ENCODE measurements at regions of chrX and their contacts with region 1.

Region 1: GRCh38 chrX:17374619-17375366 is at the start of gene NHS:
- DNase-seq: peak; percentile 61 to 79 (median 64)
- ATAC-seq: peak; percentile 67 to 89 (median 88)
- H3K4me3 ChIP-seq: peak within 1 kb of the TSS; percentile 26 to 67 (median 52)
- H3K27ac ChIP-seq: peak within 1 kb of the TSS in 7 of 12 donors; percentile 6 to 81 (median 39)
- H3K4me1 ChIP-seq: peaks cover 0 to 14% (median 0%) of the 10 kb centered on the region in 12 donors
- H3K27me3 ChIP-seq: peaks cover 0 to 41% (median 0%) of the 10 kb centered on the region in 9 donors
- CTCF ChIP-seq: peak in 11 of 12 donors; percentile 26 to 65 (median 43)
- POLR2A ChIP-seq: no peak
- total RNA-seq, gene NHS: 0.67 to 3.4 (median 1.7) TPM

Region 2: DNA sequence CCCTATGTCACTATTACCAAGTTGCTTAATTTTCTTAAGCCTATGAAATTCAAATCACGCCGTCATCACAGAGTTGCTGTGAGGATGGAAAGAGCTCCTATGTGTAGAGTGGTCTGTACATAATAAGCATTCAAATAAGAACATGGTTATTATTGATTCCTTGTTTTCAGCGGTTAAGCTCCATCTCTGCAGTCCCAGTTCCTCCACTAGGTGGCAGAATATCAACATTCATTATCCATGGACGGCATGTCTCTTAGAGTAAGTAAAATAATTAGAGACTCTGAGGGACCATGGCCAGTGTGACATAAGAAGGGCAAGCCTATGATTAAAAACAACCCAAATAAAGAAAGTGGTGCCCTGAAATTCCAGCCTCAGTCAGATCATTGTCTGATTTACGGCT is 132.3 kb before region 1 on chrX:
- intact Hi-C with region 1: loop called in 5 of 10 experiments (anchors 5 to 10 kb)
- DNase-seq: peak in 2 of 5 donors; percentile 7 to 18
- ATAC-seq: peak in 1 of 4 donors; percentile 55
- H3K4me3 ChIP-seq: no peak overlapping the region
- H3K27ac ChIP-seq: no peak overlapping the region
- H3K4me1 ChIP-seq: no peaks in the 10 kb centered on the region
- H3K27me3 ChIP-seq: peaks cover 0 to 4% (median 0%) of the 10 kb centered on the region in 9 donors
- CTCF ChIP-seq: peak; percentile 56 to 78 (median 70)
- POLR2A ChIP-seq: no peak

Region 3: GRCh38 chrX:17521871-17522693 is 147.3 kb after region 1 on chrX:
- intact Hi-C with region 1: loop called in 4 of 10 experiments (anchors 5 to 10 kb)
- DNase-seq: peak in 1 of 5 donors; percentile 31
- ATAC-seq: peak in 1 of 4 donors; percentile 19
- H3K4me3 ChIP-seq: no peak overlapping the region
- H3K27ac ChIP-seq: peak overlapping the region in 1 of 12 donors; percentile 11
- H3K4me1 ChIP-seq: peaks cover 0 to 12% (median 2%) of the 10 kb centered on the region in 12 donors
- H3K27me3 ChIP-seq: peaks cover 0 to 4% (median 0%) of the 10 kb centered on the region in 9 donors
- CTCF ChIP-seq: no peak
- POLR2A ChIP-seq: no peak

Region 4: GRCh38 chrX:17580539-17581152 is 205.9 kb after region 1 on chrX:
- intact Hi-C with region 1: loop called in 2 of 10 experiments (anchors 10 kb)
- DNase-seq: peak in 2 of 5 donors; percentile 20 to 27
- ATAC-seq: peak; percentile 51 to 86 (median 84)
- H3K4me3 ChIP-seq: no peak overlapping the region
- H3K27ac ChIP-seq: peak overlapping the region in 4 of 12 donors; percentile 18 to 48 (median 38)
- H3K4me1 ChIP-seq: peaks cover 0 to 17% (median 4%) of the 10 kb centered on the region in 12 donors
- H3K27me3 ChIP-seq: peaks cover 0 to 7% (median 0%) of the 10 kb centered on the region in 9 donors
- CTCF ChIP-seq: no peak
- POLR2A ChIP-seq: no peak

Region 5: DNA sequence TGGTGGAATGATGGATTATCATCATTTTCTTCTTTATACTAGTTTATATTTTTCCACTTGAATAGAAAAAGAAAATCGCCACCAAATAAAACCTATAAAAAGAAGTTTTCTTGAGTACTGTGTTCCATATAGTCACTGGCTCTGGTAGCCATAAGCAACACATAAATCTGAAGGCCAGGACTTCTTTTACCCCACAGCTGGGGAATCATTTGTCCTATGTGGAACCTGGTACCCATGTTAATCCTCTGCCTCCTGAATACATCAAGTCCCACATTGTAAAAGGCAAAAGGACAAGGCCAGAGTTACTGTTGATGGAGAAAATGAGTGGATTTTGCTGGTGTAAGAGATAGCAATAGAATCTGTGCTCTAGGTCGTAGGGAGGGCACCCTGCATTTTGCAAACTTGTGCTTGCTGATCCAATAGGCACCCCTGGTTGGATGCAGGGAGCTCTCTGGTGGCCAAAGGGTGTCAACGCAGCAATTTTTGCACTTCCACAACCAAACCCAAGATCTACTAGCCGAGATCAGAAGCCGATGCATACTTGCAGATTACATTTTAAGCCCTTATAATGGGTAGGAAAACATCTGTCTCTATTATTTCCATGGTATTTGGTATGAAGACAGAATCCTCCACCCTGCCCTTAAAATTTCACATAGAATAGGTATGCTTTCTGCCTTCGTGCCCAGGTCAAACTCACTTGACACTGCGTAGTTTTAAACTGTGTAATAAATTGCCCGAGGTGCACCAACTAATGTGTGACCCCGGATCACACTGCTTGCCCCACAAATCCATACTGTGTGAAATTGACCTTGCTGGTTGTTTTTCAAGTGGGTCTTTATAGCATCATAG is 216.3 kb after region 1 on chrX:
- intact Hi-C with region 1: loop called in 9 of 10 experiments (anchors 2 to 10 kb)
- DNase-seq: peak; percentile 44 to 60 (median 52)
- ATAC-seq: peak; percentile 77 to 90 (median 83)
- H3K4me3 ChIP-seq: peak overlapping the region in 5 of 12 donors; percentile 3 to 43 (median 33)
- H3K27ac ChIP-seq: peak overlapping the region in 5 of 12 donors; percentile 3 to 72 (median 38)
- H3K4me1 ChIP-seq: peaks cover 0 to 19% (median 2%) of the 10 kb centered on the region in 12 donors
- H3K27me3 ChIP-seq: peaks cover 0 to 4% (median 0%) of the 10 kb centered on the region in 9 donors
- CTCF ChIP-seq: peak; percentile 52 to 75 (median 64)
- POLR2A ChIP-seq: no peak

Region 6: DNA sequence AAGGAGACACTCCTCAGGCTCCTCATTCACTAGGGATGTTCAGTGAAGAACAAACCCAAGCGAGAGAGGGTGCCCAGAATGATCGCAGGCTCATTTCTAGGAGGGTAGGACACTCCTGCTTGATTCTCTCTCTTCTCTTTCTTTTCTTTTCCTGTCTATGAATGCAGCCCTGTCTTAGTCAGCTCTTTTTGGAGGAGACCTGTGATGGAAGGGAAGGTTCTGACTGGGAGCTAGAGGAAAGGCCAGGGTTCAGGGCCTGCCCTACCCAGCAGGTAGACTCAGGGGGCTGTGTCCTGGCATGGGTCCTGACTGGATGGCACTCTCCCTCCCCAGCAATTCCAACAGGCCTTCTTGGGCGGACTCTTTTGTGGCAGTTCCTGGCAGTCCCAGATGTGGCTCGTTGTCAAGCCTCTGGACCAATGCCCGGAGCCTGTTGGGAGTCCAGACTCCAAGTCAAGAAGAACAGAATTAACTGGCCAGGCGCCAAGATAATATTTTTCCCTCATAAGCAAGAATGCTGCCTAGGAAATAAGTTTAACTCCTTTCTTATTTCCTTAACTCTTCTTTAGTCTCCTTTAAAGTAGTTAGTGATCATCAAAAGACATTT is 223.1 kb after region 1 on chrX:
- intact Hi-C with region 1: loop called in 7 of 10 experiments (anchors 2 to 10 kb)
- DNase-seq: peak; percentile 74 to 88 (median 83)
- ATAC-seq: peak in 3 of 4 donors; percentile 72 to 78 (median 74)
- H3K4me3 ChIP-seq: no peak overlapping the region
- H3K27ac ChIP-seq: peak overlapping the region in 10 of 12 donors; percentile 9 to 72 (median 48)
- H3K4me1 ChIP-seq: peaks cover 0 to 22% (median 7%) of the 10 kb centered on the region in 12 donors
- H3K27me3 ChIP-seq: peaks cover 0 to 4% (median 0%) of the 10 kb centered on the region in 9 donors
- CTCF ChIP-seq: no peak
- POLR2A ChIP-seq: no peak

Measured in heart left ventricle (tissue), 16 donors.